ENCODE measurements at regions of chr3 and their contacts with region 1.

Region 1: DNA sequence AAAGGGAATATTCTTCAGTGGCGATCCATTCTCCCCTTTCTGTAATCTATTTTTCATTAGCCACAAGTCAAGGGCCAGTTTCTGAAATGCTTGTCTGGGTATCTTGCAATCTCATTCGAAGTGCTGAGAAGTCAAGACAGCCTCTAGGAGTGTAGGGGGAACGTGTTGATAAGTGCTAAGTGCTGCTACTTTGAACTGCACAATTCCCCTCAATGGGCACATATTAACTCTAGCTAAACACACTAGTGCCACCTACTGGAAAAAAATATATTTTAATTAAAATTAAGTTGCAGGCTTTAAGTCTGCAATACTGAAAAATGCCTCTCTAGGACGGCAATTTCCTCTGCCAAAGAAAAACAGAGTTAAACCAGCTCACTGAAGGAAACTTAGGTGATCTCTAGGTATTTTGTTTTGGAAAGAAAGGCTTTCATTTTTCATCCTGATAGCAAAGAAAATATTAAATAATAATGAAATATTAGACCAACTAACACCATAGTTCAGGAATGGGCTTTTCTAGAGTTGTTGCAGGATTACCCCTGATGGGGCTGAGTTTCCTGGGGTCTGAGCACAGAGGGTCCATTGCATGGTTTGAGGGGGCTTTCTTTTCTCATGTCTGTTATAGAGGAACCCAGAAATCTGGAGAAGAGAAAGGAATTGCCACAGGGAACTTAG is 181.9 kb upstream of the KBTBD8 start:
- DNase-seq: no peak
- H3K4me3 ChIP-seq: no peak overlapping the region
- H3K27ac ChIP-seq: no peak overlapping the region
- H3K4me1 ChIP-seq: no peaks in the 10 kb centered on the region
- H3K27me3 ChIP-seq: no peaks in the 10 kb centered on the region
- CTCF ChIP-seq: peak; percentile 32 to 69 (median 57)
- POLR2A ChIP-seq: no peak

Region 2: DNA sequence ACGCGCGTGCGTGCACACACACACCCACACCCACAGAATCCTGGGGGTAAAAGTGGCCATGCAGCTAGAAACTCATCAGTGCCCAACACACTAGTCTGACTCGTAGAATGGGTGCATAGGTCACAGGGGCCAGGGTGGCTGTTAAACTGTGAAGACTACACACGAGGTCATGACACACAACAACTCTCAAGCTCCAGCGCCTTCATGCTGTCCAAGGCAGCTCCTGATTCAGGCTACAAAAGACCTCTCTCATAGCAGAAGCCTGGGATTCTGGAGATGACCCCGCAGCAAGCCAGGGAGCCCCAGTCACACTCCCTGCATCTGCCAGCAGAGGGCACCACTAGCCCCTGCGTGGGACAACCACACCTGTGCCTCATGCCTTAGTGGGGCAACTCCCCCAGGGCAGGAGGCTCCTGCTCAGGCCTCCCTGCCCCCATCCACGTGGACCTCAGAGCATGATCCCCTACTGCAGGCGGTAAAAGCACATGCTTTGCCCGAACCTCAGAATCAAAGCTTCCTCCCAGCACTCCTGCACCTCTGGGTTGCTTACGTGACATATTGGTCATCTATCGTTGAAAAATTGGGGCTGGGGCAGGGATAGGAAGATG is 408.5 kb before region 1 on chr3:
- intact Hi-C with region 1: loop called (anchors 5 kb)
- DNase-seq: no peak
- H3K4me3 ChIP-seq: no peak overlapping the region
- H3K27ac ChIP-seq: peak overlapping the region; percentile 77
- H3K4me1 ChIP-seq: peaks cover 55% of the 10 kb centered on the region
- H3K27me3 ChIP-seq: no peaks in the 10 kb centered on the region
- CTCF ChIP-seq: peak; percentile 56 to 91 (median 85)
- POLR2A ChIP-seq: no peak